ENCODE measurements at regions of chr3 and their contacts with region 1.

Region 1: DNA sequence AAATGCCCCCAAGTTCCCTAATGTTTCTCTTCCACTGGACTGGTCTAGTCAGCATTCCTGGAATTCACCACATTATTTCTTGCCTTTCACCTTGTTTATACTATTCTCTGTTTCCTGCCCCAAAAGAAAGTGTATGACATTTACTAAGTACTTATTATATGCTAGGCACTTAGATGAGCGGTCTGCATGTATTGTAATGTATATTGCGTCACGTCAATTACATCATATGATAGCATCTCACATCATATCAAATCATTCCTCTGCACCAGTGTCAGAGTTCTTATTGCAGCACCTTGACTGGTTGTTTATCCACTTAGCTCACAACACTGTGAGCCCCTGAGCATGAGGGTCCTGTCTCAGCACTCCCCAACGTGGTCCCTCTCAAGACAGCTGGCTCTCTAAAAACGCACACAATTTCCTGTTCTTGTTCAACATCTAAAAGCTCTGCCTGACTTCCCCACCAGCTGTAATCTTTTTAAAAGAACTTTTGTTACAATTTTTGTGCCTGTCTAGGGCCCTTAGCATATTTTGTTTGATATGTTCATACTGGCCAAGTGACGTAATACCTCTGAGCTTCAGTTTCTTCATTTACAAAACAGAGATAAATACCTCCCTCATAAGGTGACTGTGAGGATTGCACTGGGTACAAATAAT is 58.8 kb downstream of the ARHGAP31 start:
- DNase-seq: no peak
- ATAC-seq: peak; percentile 62
- H3K4me3 ChIP-seq: no peak overlapping the region
- H3K27ac ChIP-seq: peak overlapping the region; percentile 53
- H3K4me1 ChIP-seq: peaks cover 40% of the 10 kb centered on the region
- H3K27me3 ChIP-seq: no peaks in the 10 kb centered on the region
- CTCF ChIP-seq: peak; percentile 34 to 42 (median 34); a peak in 4 of 6 replicates
- EP300 ChIP-seq: no peak
- POLR2A ChIP-seq: no peak
- RAD21 ChIP-seq: peak; percentile 72

Region 2: GRCh38 chr3:118850687-118851086 is 502.3 kb before region 1 on chr3:
- CTCF ChIA-PET with region 1: no interaction called
- POLR2A ChIA-PET with region 1: no interaction called
- RAD21 ChIA-PET with region 1: no interaction called
- SMC1A ChIA-PET with region 1: no interaction called
- in situ Hi-C with region 1: no loop called
- intact Hi-C with region 1: no loop called
- DNase-seq: no peak
- ATAC-seq: no peak
- H3K4me3 ChIP-seq: no peak overlapping the region
- H3K27ac ChIP-seq: no peak overlapping the region
- H3K4me1 ChIP-seq: peaks cover 3% of the 10 kb centered on the region
- H3K27me3 ChIP-seq: no peaks in the 10 kb centered on the region
- CTCF ChIP-seq: no peak
- EP300 ChIP-seq: no peak
- POLR2A ChIP-seq: no peak
- RAD21 ChIP-seq: no peak

Region 3: GRCh38 chr3:118884748-118885206 is 468.2 kb before region 1 on chr3:
- CTCF ChIA-PET with region 1: interaction called, 13 read pairs
- POLR2A ChIA-PET with region 1: no interaction called
- RAD21 ChIA-PET with region 1: no interaction called
- SMC1A ChIA-PET with region 1: interaction called, 6 read pairs
- in situ Hi-C with region 1: no loop called
- intact Hi-C with region 1: no loop called
- DNase-seq: no peak
- ATAC-seq: peak; percentile 92
- H3K4me3 ChIP-seq: no peak overlapping the region
- H3K27ac ChIP-seq: no peak overlapping the region
- H3K4me1 ChIP-seq: no peaks in the 10 kb centered on the region
- H3K27me3 ChIP-seq: no peaks in the 10 kb centered on the region
- CTCF ChIP-seq: peak; percentile 74 to 91 (median 88)
- EP300 ChIP-seq: no peak
- POLR2A ChIP-seq: no peak
- RAD21 ChIP-seq: peak; percentile 57

Region 4: DNA sequence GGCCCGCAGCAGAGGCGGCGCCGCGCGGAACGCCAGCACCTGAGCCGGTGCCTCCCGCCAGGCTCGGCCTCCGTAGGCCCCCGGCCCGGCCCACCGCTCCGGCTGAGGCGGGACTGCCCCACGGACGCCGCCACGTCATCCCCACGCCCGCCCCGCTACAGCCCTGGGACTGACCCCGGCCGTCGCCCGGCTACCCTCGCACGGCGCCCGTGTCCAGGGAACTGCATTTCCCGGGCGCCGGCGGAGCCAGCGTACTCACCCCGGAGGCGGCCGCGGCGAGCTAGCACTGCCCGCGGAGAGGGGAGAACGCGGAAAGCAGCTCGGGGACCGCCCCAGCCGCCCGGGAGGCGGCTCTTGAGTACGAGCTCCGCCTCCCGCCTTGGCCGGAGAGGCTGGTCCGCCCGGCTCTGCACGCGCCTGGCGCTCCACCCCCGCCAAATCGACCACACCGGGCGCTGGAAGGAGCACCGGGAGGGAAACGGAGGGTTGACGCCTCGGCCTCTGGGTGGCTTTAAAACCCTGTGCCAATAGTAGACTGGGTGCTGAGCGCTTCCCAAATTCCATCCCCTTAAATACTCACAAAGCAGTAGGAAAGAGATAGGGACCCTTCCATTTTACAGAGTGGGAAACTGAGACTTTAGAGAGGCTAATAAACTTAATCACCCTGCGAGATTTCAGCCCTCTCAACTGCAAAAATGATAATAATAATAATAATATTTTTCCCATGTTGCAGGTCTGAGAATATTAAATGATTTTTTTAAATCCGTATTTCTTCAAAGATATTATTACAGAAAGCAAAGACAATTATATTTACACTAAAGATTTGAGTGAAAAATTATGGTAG is 112.2 kb before region 1 on chr3 and contains the start of gene B4GALT4:
- CTCF ChIA-PET with region 1: interaction called, 17 read pairs
- POLR2A ChIA-PET with region 1: no interaction called
- RAD21 ChIA-PET with region 1: interaction called, 10 read pairs
- SMC1A ChIA-PET with region 1: interaction called, 15 read pairs
- in situ Hi-C with region 1: no loop called
- intact Hi-C with region 1: no loop called
- DNase-seq: no peak
- ATAC-seq: peak; percentile 94
- H3K4me3 ChIP-seq: peak within 1 kb of the TSS; percentile 98
- H3K27ac ChIP-seq: peak within 1 kb of the TSS; percentile 88
- H3K4me1 ChIP-seq: peaks cover 4% of the 10 kb centered on the region; the same call in 1 of the 2 replicates
- H3K27me3 ChIP-seq: no peaks in the 10 kb centered on the region
- CTCF ChIP-seq: no peak
- EP300 ChIP-seq: no peak
- POLR2A ChIP-seq: peak; percentile 98
- RAD21 ChIP-seq: no peak
- polyA plus RNA-seq, gene B4GALT4: 13.8 to 15.4 TPM

Region 5: DNA sequence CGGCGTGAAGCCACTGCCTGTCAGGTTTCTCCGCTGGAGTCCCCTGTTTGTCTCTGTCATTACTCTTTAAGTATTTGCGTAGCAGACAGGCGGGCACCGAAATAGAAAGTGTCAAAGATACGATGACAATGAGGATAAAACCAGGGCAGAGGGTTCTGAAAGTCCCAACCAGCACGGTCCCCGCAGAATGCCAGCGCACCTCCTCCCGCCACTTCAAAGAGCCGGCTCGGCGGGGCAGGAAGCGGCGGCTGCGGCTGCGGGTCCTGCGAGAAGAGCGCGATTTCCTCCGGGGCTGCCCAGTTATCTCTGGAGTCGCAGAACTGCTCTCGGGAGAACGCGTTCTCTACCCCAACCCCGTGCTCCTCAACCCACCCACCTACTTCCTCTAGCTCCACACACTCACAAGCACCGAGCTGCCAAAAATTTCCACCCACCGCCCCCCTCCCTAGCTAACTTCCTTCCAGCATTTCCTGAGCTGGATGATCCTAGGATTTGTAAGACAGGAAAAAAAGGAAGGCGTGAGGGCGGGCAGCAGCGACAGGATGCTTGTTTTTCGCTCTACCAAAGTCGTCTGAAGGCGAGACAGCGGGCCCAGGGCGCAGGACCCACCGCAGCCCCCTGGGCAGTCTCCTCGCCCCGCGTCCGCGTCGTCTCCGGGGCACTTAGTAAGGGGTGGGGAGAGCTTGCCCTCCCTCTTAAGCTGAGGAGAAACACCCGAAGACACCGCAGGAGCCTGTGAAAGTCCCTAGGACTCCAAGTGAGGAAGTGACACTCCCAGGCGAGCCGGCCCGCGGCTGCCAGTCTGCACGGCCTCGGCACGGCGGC is 58.9 kb before region 1 on chr3 and contains the start of gene ARHGAP31:
- CTCF ChIA-PET with region 1: interaction called, 21 read pairs
- POLR2A ChIA-PET with region 1: interaction called, 4 read pairs
- RAD21 ChIA-PET with region 1: interaction called, 66 read pairs
- SMC1A ChIA-PET with region 1: interaction called, 62 read pairs
- in situ Hi-C with region 1: no loop called
- intact Hi-C with region 1: loop called (anchors 5 kb)
- DNase-seq: peak; percentile 62
- ATAC-seq: peak; percentile 82
- H3K4me3 ChIP-seq: peak within 1 kb of the TSS; percentile 94
- H3K27ac ChIP-seq: peak within 1 kb of the TSS; percentile 96
- H3K4me1 ChIP-seq: peaks cover 27% of the 10 kb centered on the region
- H3K27me3 ChIP-seq: no peaks in the 10 kb centered on the region
- CTCF ChIP-seq: no peak
- EP300 ChIP-seq: peak in 1 of 2 experiments; percentile 14; a peak in 1 of 4 replicates
- POLR2A ChIP-seq: peak; percentile 81
- RAD21 ChIP-seq: no peak
- polyA plus RNA-seq, gene ARHGAP31: 0.97 to 1.6 TPM

Region 6: GRCh38 chr3:119322835-119323722 is 29.9 kb before region 1 on chr3:
- CTCF ChIA-PET with region 1: interaction called, 13 read pairs
- POLR2A ChIA-PET with region 1: interaction called, 8 read pairs
- RAD21 ChIA-PET with region 1: interaction called, 11 read pairs
- SMC1A ChIA-PET with region 1: interaction called, 14 read pairs
- in situ Hi-C with region 1: no loop called
- intact Hi-C with region 1: loop called (anchors 1 kb)
- DNase-seq: peak; percentile 73
- ATAC-seq: peak; percentile 92
- H3K4me3 ChIP-seq: peak overlapping the region; percentile 78
- H3K27ac ChIP-seq: peak overlapping the region; percentile 97
- H3K4me1 ChIP-seq: peaks cover 31% of the 10 kb centered on the region
- H3K27me3 ChIP-seq: no peaks in the 10 kb centered on the region
- CTCF ChIP-seq: no peak
- EP300 ChIP-seq: peak; percentile 72 to 87; a peak in 3 of 4 replicates
- POLR2A ChIP-seq: peak; percentile 95
- RAD21 ChIP-seq: no peak

Region 7: DNA sequence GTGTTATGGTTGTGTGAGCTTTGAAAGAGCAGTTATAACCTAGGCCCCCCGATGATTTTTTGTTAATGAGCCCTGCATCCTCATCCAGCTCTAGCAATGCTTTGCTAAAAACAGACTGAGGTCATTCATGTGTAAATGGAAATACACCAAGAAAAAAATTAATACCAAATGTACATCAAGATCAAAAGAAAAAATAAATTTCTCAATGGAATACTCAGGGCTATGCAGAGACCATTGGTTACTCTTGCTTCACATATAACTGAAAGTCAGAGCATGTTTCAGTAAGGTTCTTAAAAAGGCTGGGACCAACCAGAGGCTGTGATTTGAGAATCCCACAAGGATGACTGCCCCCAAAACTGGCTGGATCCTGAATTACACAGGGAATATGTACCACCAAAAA is 10.8 kb before region 1 on chr3:
- CTCF ChIA-PET with region 1: interaction called, 12 read pairs
- POLR2A ChIA-PET with region 1: interaction called, 6 read pairs
- RAD21 ChIA-PET with region 1: interaction called, 14 read pairs
- SMC1A ChIA-PET with region 1: interaction called, 32 read pairs
- in situ Hi-C with region 1: no loop called
- intact Hi-C with region 1: no loop called
- DNase-seq: no peak
- ATAC-seq: no peak
- H3K4me3 ChIP-seq: no peak overlapping the region
- H3K27ac ChIP-seq: no peak overlapping the region
- H3K4me1 ChIP-seq: peaks cover 7% of the 10 kb centered on the region
- H3K27me3 ChIP-seq: no peaks in the 10 kb centered on the region
- CTCF ChIP-seq: no peak
- EP300 ChIP-seq: no peak
- POLR2A ChIP-seq: no peak
- RAD21 ChIP-seq: no peak